ENCODE measurements at regions of chr3 and their contacts with region 1.

Region 1: GRCh38 chr3:128322066-128323022 is 144.3 kb downstream of the DNAJB8 start:
- DNase-seq: peak; percentile 78
- ATAC-seq: peak; percentile 79
- H3K4me3 Mint-ChIP-seq: no peak overlapping the region
- H3K27ac Mint-ChIP-seq: no peak overlapping the region
- H3K4me1 Mint-ChIP-seq: no peaks in the 10 kb centered on the region
- H3K27me3 Mint-ChIP-seq: no peaks in the 10 kb centered on the region
- CTCF ChIP-seq: peak; percentile 53; the same call in 1 of the 2 replicates

Region 2: GRCh38 chr3:128236657-128237056 is 85.7 kb before region 1 on chr3:
- CTCF ChIA-PET with region 1: interaction called, 14 read pairs
- POLR2A ChIA-PET with region 1: no interaction called
- DNase-seq: no peak
- ATAC-seq: no peak
- H3K4me3 Mint-ChIP-seq: no peak overlapping the region
- H3K27ac Mint-ChIP-seq: peak overlapping the region; percentile 48; the same call in 1 of the 2 replicates
- H3K4me1 Mint-ChIP-seq: peaks cover 23% of the 10 kb centered on the region
- H3K27me3 Mint-ChIP-seq: no peaks in the 10 kb centered on the region
- CTCF ChIP-seq: no peak

Region 3: GRCh38 chr3:128270559-128271492 is 51.5 kb before region 1 on chr3:
- CTCF ChIA-PET with region 1: interaction called, 25 read pairs
- POLR2A ChIA-PET with region 1: no interaction called
- DNase-seq: peak; percentile 50
- ATAC-seq: peak; percentile 90
- H3K4me3 Mint-ChIP-seq: peak overlapping the region; percentile 5; the same call in 1 of the 2 replicates
- H3K27ac Mint-ChIP-seq: peak overlapping the region; percentile 55
- H3K4me1 Mint-ChIP-seq: peaks cover 55% of the 10 kb centered on the region
- H3K27me3 Mint-ChIP-seq: no peaks in the 10 kb centered on the region
- CTCF ChIP-seq: no peak

Region 4: DNA sequence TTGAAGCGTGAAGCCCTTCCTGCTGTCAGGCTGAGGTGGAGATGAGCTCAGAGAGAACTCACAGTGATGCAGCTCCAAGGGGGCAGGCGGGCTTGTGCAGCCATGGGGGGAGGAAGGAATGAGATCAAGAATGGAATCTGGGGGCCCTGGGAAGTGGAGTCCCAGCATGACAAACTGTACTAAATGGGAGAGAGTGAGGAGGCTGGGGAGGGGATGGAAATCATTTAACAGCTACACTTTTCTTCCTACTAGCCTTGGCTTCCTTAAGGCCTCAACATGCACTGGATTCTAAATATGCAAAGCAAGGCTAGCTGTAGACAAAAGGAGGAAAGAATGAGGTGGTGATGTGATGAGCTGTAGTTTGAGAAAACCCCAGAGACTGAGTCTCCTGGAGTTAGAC is 35.1 kb before region 1 on chr3:
- CTCF ChIA-PET with region 1: interaction called, 60 read pairs
- POLR2A ChIA-PET with region 1: no interaction called
- DNase-seq: no peak
- ATAC-seq: peak; percentile 43
- H3K4me3 Mint-ChIP-seq: no peak overlapping the region
- H3K27ac Mint-ChIP-seq: peak overlapping the region; percentile 50
- H3K4me1 Mint-ChIP-seq: peaks cover 47% of the 10 kb centered on the region
- H3K27me3 Mint-ChIP-seq: peaks cover 20% of the 10 kb centered on the region
- CTCF ChIP-seq: no peak

Region 5: DNA sequence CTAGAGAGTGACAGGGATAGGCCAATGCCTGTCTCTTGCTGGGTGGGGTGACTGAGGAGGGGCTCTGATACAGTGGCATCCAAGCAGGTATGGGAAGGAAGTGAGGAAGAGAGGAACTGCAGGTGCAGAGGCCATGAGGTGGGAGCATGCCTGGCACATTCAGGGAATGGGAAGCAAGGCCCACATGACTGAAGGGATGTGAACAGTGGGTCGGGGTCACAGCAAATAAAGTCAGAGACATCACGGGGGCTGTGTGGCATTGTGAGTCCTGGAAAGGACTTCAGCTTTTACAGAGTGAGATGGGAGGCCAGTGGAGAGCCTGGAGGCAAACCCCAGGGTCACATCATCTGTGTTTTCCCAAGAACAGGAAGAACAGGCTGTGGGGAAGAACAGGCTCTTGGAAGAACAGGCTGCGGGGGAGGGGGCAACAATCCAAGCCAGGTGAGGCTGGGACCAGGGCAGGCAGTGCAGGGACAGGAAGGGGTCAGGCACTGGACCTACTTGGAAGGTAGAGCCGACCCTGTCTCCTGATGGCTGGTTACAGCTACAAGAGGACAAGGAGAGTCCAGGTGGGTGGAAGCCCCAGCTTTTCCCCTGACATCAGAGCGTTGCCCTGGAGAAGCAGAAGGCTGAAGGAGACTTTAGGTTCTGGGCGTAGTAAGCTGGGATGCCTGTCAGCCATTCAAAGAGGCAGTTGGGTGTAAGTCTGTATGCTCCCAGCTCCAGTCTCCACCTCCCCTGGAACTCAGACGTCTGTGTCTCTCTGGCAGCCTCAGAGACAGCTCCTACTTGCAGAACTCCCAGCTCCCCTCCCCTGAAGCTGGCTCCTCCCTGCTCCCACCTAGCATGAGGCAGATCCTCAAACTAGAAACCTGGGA is 13.2 kb after region 1 on chr3:
- CTCF ChIA-PET with region 1: interaction called, 19 read pairs
- POLR2A ChIA-PET with region 1: no interaction called
- DNase-seq: peak; percentile 39
- ATAC-seq: peak; percentile 81
- H3K4me3 Mint-ChIP-seq: no peak overlapping the region
- H3K27ac Mint-ChIP-seq: peak overlapping the region; percentile 41; the same call in 1 of the 2 replicates
- H3K4me1 Mint-ChIP-seq: peaks cover 18% of the 10 kb centered on the region
- H3K27me3 Mint-ChIP-seq: no peaks in the 10 kb centered on the region
- CTCF ChIP-seq: no peak

Region 6: DNA sequence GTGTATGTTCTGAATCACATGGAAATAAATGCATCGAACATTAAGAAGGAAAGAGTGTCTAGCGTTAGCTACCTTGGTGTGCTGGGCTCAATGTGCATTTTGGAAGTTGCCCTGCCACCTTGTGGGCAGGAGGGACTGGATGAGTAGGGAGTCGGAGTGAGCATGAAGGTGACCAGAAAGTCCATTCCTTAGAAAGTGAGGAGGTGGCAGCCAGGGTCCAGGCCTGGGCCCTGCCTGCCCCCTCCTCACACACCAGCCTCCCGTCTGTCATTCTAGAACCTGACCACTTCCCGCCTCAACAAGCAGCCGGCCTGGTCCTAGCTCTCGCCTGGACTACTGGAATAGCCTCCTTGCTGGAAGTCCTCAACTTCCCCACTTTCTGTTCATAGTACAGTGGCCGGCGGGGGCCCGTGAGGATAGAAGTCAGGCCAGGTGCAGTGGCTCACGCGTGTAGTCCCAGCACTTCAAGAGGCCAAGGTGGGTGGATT is 180.9 kb after region 1 on chr3:
- CTCF ChIA-PET with region 1: no interaction called
- POLR2A ChIA-PET with region 1: no interaction called
- DNase-seq: no peak
- ATAC-seq: peak; percentile 74
- H3K4me3 Mint-ChIP-seq: no peak overlapping the region
- H3K27ac Mint-ChIP-seq: no peak overlapping the region
- H3K4me1 Mint-ChIP-seq: no peaks in the 10 kb centered on the region
- H3K27me3 Mint-ChIP-seq: peaks cover 49% of the 10 kb centered on the region
- CTCF ChIP-seq: no peak

Measured in WTC11 (cell line).